ENCODE measurements at regions of chr19 and their contacts with region 1.

Region 1: GRCh38 chr19:46860125-46860845 is 512 bp upstream of the ARHGAP35 start:
- DNase-seq: peak; percentile 84 to 95 (median 94)
- ATAC-seq: peak; percentile 91
- H3K4me3 ChIP-seq: peak overlapping the region; percentile 92
- H3K4me3 Mint-ChIP-seq: peak overlapping the region in 9 of 10 donors; percentile 70 to 97 (median 92)
- H3K27ac ChIP-seq: peak overlapping the region; percentile 94
- H3K27ac Mint-ChIP-seq: peak overlapping the region; percentile 68 to 98 (median 92)
- H3K4me1 ChIP-seq: peaks cover 24 to 30% of the 10 kb centered on the region in 2 donors
- H3K4me1 Mint-ChIP-seq: peaks cover 13 to 25% (median 19%) of the 10 kb centered on the region in 7 donors
- H3K27me3 ChIP-seq: no peaks in the 10 kb centered on the region
- H3K27me3 Mint-ChIP-seq: no peaks in the 10 kb centered on the region

Region 2: DNA sequence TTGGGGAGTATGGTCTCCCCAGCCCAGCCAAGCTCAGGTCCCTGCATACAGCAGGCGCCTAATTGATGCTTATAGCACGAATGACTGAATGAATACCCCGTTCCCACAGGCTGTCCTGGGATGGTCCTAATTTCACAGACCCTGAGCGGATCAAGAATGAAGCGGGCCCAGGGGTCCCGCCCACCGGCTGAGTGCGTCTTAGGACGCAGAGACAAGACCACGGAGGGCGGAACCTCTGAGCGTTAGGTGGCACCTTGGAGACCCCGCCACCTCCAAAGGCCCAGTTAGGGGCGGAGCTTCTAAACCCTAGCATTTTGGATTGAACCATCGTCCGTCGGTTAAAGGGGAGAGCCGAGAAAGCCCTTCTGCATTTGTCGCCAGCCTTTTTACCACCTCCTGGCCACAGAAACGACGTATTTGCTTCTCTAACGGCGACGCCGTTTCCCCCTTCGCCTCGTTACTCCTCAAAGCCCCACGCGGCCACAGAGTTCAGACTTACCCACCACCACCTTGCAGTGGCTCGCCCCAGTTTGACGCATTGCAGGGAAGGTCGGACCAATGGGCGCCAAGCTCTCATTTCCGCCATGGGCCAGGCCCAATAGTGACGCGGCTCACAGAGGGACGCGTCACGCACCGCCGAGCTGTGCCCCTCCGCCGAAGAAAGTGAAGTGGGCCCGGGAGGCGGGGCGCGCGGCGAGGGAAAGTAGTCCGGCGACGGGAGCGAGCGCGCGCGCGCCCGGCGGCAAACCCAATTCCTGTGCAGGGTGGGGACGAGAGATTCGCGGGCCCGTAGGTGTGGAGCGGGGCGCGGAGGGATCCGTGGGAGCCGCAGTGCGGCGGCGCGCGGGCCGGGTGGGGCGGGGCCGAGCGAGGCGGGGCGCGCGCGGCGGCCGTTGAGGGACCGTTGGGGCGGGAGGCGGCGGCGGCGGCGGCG is 259.6 kb before region 1 on chr19:
- CTCF ChIA-PET with region 1: no interaction called
- POLR2A ChIA-PET with region 1: interaction called, 3 read pairs
- intact Hi-C with region 1: loop called (anchors 2 to 10 kb)
- DNase-seq: peak; percentile 96 to 99 (median 98)
- ATAC-seq: peak; percentile 91
- H3K4me3 ChIP-seq: peak overlapping the region; percentile 69
- H3K4me3 Mint-ChIP-seq: peak overlapping the region; percentile 95 to 100 (median 98)
- H3K27ac ChIP-seq: peak overlapping the region; percentile 99
- H3K27ac Mint-ChIP-seq: peak overlapping the region; percentile 100
- H3K4me1 ChIP-seq: peaks cover 15 to 30% of the 10 kb centered on the region in 2 donors
- H3K4me1 Mint-ChIP-seq: peaks cover 27 to 57% (median 46%) of the 10 kb centered on the region in 7 donors
- H3K27me3 ChIP-seq: no peaks in the 10 kb centered on the region
- H3K27me3 Mint-ChIP-seq: peaks cover 0 to 10% (median 0%) of the 10 kb centered on the region in 5 donors

Region 3: DNA sequence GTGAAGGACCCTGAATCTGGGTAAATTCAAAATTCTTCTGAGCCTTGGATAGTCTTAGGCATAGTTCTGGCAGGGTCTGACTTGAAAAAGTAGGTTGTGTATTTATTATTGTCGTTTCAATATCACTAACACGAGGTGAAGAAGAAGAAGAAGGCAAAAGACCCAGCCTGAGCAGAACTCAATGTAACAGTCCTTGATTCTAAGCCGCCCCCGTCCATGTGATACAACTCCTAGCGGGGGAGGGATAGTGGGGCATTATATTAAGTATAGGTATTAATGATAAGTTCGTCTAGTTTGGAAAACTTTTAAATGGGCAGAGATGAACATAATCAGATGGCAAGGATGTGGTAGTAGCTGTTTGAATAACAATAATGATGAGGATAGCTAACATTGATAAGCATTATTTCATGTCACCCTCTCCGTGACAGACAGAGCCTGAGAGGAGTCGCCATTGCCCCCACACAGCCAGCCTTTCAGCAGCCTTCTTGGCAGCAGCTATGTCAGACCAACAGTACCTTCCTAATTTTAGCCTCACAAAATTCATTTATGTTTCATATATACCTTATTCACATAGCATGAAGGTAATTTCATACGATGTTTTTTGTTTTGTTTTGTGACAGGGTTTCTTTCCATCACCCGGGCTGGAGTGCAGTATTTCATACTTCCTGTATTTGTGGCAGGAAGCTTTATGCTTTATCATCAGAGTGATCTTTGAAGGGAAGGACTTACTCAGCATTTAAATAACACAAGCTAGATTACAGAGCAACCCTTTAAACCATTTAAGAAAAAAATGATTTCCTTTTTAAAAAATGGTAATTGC is 94.9 kb after region 1 on chr19:
- CTCF ChIA-PET with region 1: no interaction called
- POLR2A ChIA-PET with region 1: no interaction called
- intact Hi-C with region 1: loop called in 1 of 2 experiments (anchors 2 kb)
- DNase-seq: peak in 7 of 9 donors; percentile 43 to 69 (median 57)
- ATAC-seq: peak; percentile 89
- H3K4me3 ChIP-seq: peak overlapping the region; percentile 64
- H3K4me3 Mint-ChIP-seq: peak overlapping the region; percentile 70 to 88 (median 82)
- H3K27ac ChIP-seq: peak overlapping the region; percentile 54
- H3K27ac Mint-ChIP-seq: peak overlapping the region; percentile 71 to 92 (median 85)
- H3K4me1 ChIP-seq: peaks cover 27 to 88% of the 10 kb centered on the region in 2 donors
- H3K4me1 Mint-ChIP-seq: peaks cover 37 to 69% (median 42%) of the 10 kb centered on the region in 7 donors
- H3K27me3 ChIP-seq: no peaks in the 10 kb centered on the region
- H3K27me3 Mint-ChIP-seq: no peaks in the 10 kb centered on the region

Region 4: DNA sequence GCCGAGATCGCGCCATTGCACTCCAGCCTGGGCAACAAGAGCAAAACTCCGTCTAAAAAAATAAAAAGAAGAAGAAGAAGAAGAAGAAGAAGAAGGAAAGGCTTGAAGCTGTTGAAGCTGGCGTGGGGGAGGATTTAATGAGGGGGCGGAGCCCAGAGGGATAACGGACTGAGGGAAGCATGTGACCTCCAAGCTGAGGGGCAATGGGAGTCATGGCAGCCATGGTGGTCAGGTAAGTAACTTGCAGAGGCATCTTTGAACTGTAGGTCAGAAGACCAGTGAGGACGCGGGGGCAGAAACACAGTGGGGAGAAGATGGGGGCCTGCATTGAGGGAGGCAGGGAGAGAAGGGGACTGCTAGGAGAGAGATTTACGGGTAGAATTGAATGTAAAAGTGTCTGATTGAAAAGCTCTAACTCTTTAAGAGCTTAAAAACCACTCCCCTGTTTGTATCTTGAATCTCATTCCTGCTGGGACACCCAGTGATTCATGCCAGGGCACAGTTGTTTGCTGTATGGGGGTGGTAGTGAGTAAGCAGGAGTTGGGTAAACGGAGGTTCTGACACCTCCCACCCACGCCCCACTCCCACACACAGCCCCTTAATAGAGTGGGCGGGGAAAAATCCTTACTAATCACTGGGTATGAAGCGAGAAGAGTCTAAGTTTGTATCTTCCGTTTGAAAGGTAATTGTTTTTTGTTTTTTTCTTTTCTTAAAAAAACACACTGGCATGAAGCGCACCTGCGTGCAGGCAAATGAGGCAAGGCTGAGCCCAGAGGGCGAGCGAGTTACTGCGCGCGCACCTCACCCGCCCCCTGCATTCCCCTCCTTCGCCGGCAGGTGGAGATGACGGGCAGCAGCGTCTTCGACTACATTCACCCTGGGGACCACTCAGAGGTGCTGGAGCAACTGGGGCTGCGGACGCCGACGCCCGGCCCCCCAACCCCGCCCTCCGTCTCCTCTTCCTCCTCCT is 175.1 kb after region 1 on chr19:
- CTCF ChIA-PET with region 1: interaction called, 4 read pairs
- POLR2A ChIA-PET with region 1: no interaction called
- intact Hi-C with region 1: loop called (anchors 1 kb)
- DNase-seq: peak; percentile 91 to 100 (median 97)
- ATAC-seq: peak; percentile 99
- H3K4me3 ChIP-seq: peak overlapping the region; percentile 74
- H3K4me3 Mint-ChIP-seq: peak overlapping the region; percentile 83 to 97 (median 92)
- H3K27ac ChIP-seq: peak overlapping the region; percentile 62
- H3K27ac Mint-ChIP-seq: peak overlapping the region; percentile 71 to 93 (median 85)
- H3K4me1 ChIP-seq: peaks cover 11 to 13% of the 10 kb centered on the region in 2 donors
- H3K4me1 Mint-ChIP-seq: peaks cover 7 to 23% (median 16%) of the 10 kb centered on the region in 7 donors
- H3K27me3 ChIP-seq: no peaks in the 10 kb centered on the region
- H3K27me3 Mint-ChIP-seq: peaks cover 6 to 26% (median 14%) of the 10 kb centered on the region in 5 donors

Region 5: GRCh38 chr19:47225746-47226425 is 365.6 kb after region 1 on chr19:
- CTCF ChIA-PET with region 1: no interaction called
- POLR2A ChIA-PET with region 1: no interaction called
- intact Hi-C with region 1: loop called in 1 of 2 experiments (anchors 5 kb)
- DNase-seq: peak; percentile 72 to 94 (median 82)
- ATAC-seq: peak; percentile 76
- H3K4me3 ChIP-seq: peak overlapping the region; percentile 54
- H3K4me3 Mint-ChIP-seq: peak overlapping the region; percentile 31 to 84 (median 66)
- H3K27ac ChIP-seq: peak overlapping the region; percentile 81
- H3K27ac Mint-ChIP-seq: peak overlapping the region in 8 of 9 donors; percentile 26 to 96 (median 84)
- H3K4me1 ChIP-seq: peaks cover 28 to 31% of the 10 kb centered on the region in 2 donors
- H3K4me1 Mint-ChIP-seq: peaks cover 8 to 16% (median 11%) of the 10 kb centered on the region in 7 donors
- H3K27me3 ChIP-seq: no peaks in the 10 kb centered on the region
- H3K27me3 Mint-ChIP-seq: no peaks in the 10 kb centered on the region

Measured in naive thymus-derived CD4-positive, alpha-beta T cell (primary cell).